ENCODE measurements at regions of chr18 and their contacts with region 1.

Region 1: DNA sequence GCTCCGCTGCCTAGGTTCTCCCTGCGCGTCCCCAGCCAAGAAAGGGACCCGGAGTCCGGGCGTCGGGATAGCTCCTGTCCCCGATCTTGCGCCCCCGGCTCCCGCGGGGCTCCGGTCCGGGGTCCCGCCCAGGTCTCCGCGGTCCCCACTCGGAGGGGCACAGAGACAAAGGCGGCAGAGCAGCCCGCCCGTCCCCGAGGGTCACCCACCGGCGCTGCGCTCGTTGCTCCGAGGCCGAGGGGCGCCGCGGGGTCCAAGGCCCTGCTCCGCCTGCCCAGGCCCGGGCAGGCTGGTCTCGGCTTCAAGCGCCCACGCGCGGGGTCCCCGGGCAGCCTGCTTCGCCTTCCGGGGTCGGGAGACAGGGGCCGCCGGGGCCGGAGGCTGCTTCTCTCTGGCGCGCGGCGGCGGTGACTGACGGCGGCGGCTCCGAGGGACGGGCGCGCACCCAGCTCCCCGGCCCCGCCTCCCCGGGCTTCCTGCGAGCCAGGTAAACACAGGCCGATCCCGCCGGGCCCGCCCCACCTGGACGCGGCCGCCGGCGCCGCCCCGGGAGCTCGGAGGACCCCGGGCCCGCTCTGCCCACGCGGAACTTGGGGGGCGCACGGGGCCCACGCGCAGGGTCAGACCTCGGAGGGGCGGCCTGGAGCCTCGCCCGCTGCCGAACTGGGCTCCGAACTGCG is at the start of gene MBP:
- DNase-seq: peak; percentile 53 to 74
- H3K4me3 ChIP-seq: peak within 1 kb of the TSS; percentile 95
- H3K27ac ChIP-seq: peak within 1 kb of the TSS; percentile 97
- H3K4me1 ChIP-seq: peaks cover 36% of the 10 kb centered on the region
- H3K27me3 ChIP-seq: no peaks in the 10 kb centered on the region
- CTCF ChIP-seq: no peak
- total RNA-seq, gene MBP: 37.9 and 44.4 TPM in 2 replicates

Region 2: GRCh38 chr18:77000527-77000926 is 132.0 kb before region 1 on chr18:
- CTCF ChIA-PET with region 1: no interaction called
- POLR2A ChIA-PET with region 1: no interaction called
- intact Hi-C with region 1: loop called (anchors 5 kb)
- DNase-seq: peak in 1 of 2 experiments; percentile 31
- H3K4me3 ChIP-seq: no peak overlapping the region
- H3K27ac ChIP-seq: no peak overlapping the region
- H3K4me1 ChIP-seq: no peaks in the 10 kb centered on the region
- H3K27me3 ChIP-seq: no peaks in the 10 kb centered on the region
- CTCF ChIP-seq: peak; percentile 98

Region 3: GRCh38 chr18:77054606-77055428 is 77.7 kb before region 1 on chr18:
- CTCF ChIA-PET with region 1: no interaction called
- POLR2A ChIA-PET with region 1: interaction called, 6 read pairs
- intact Hi-C with region 1: loop called (anchors 1 kb)
- DNase-seq: peak; percentile 63 to 96
- H3K4me3 ChIP-seq: peak overlapping the region; percentile 38
- H3K27ac ChIP-seq: peak overlapping the region; percentile 98
- H3K4me1 ChIP-seq: peaks cover 42% of the 10 kb centered on the region
- H3K27me3 ChIP-seq: no peaks in the 10 kb centered on the region
- CTCF ChIP-seq: peak; percentile 52; the same call in 1 of the 2 replicates

Region 4: GRCh38 chr18:77065221-77065981 is 67.1 kb before region 1 on chr18:
- CTCF ChIA-PET with region 1: no interaction called
- POLR2A ChIA-PET with region 1: no interaction called
- intact Hi-C with region 1: loop called (anchors 1 kb)
- DNase-seq: peak; percentile 54 to 97
- H3K4me3 ChIP-seq: no peak overlapping the region
- H3K27ac ChIP-seq: peak overlapping the region; percentile 97
- H3K4me1 ChIP-seq: peaks cover 84% of the 10 kb centered on the region
- H3K27me3 ChIP-seq: no peaks in the 10 kb centered on the region
- CTCF ChIP-seq: no peak

Region 5: DNA sequence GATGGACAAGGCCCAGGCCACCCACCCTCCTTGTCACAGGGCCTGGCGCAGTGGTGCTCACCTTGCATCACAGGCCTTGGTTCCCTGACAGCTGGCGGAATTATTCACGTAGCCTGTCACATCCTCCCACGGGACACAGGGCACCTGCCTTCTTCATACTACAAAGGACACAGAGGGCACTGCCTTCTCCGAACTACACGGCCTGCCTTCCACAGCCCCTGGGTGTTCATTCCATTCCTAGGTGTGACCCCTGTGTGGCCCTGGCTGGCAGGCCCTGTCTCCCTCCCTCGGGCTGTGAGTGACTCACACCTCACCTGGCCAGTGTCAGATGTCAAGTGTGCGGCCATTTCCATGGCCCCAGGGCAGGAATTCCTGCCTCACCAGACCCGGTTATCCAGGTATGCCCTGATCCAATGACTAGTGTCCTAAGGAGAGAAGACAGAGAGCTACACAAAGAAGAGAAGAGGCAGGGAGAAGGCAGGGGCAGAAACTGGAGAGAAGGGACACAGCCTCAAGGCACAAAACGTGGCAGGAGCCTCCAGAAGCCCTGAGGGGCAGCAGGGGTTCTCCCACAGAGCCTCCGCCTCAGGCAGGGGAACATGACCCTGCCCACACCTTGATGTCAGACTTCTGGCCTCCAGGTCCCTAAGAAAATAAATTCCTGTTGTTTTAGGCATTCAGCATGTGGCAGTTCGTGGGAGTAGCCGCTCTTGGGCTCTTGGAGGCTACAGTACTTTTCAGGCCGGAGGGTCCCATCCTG is 43.4 kb before region 1 on chr18:
- CTCF ChIA-PET with region 1: no interaction called
- POLR2A ChIA-PET with region 1: interaction called, 4 read pairs
- intact Hi-C with region 1: loop called (anchors 1 kb)
- DNase-seq: peak; percentile 96 to 99
- H3K4me3 ChIP-seq: peak overlapping the region; percentile 25; the same call in 1 of the 2 replicates
- H3K27ac ChIP-seq: peak overlapping the region; percentile 95
- H3K4me1 ChIP-seq: peaks cover 71% of the 10 kb centered on the region
- H3K27me3 ChIP-seq: no peaks in the 10 kb centered on the region
- CTCF ChIP-seq: no peak

Region 6: DNA sequence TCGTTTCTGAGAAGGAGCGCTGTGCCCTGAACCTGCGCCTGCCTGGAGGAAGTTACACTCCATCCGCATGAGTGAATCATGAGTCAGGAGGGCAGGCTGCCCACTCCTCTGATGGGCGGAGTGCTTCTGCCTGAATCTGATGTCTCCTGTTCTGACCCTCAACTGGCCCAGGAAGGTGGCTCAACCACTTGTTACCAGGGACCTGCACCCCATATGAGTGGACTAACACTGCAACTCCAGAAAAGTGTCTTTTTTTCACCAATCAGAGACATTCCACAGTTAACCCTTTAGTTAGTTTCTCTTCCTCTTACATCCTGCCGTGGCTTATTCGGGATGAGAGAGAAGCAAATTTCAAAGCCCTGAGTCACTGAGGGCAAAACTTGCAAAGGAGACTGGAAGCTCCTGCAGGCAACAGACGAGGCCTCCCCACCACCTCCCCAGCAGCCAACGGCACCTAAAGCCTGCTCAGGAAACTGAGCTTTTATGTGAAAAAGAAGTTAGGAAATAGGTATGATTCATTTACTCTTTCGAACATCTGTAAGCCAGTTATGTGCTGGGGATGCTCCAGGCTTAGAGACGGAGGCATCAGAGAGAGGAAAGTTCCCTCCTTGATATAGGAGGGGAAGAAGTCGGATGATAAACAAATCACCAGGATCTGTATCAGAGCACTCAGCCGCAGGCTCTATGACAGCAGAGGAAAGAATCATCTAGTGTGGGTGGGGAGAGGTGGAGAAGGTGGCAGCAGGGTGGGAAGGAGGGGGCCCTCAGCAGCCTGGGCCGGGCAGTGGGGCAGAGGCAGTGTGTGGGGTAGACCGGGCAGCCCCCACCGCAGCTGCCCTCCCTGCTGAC is 30.9 kb before region 1 on chr18:
- CTCF ChIA-PET with region 1: no interaction called
- POLR2A ChIA-PET with region 1: interaction called, 5 read pairs
- intact Hi-C with region 1: loop called (anchors 1 kb)
- DNase-seq: peak; percentile 85 to 99
- H3K4me3 ChIP-seq: peak overlapping the region; percentile 31; the same call in 1 of the 2 replicates
- H3K27ac ChIP-seq: peak overlapping the region; percentile 99
- H3K4me1 ChIP-seq: peaks cover 52% of the 10 kb centered on the region
- H3K27me3 ChIP-seq: no peaks in the 10 kb centered on the region
- CTCF ChIP-seq: no peak

Region 7: GRCh38 chr18:77207540-77207939 is 75.0 kb after region 1 on chr18:
- CTCF ChIA-PET with region 1: no interaction called
- POLR2A ChIA-PET with region 1: no interaction called
- intact Hi-C with region 1: loop called (anchors 1 kb)
- DNase-seq: no peak
- H3K4me3 ChIP-seq: no peak overlapping the region
- H3K27ac ChIP-seq: no peak overlapping the region
- H3K4me1 ChIP-seq: 0 out of 2 replicates have a peak, but pooled peaks cover 6% of the 10 kb centered on the region
- H3K27me3 ChIP-seq: no peaks in the 10 kb centered on the region
- CTCF ChIP-seq: peak; percentile 46

Region 8: DNA sequence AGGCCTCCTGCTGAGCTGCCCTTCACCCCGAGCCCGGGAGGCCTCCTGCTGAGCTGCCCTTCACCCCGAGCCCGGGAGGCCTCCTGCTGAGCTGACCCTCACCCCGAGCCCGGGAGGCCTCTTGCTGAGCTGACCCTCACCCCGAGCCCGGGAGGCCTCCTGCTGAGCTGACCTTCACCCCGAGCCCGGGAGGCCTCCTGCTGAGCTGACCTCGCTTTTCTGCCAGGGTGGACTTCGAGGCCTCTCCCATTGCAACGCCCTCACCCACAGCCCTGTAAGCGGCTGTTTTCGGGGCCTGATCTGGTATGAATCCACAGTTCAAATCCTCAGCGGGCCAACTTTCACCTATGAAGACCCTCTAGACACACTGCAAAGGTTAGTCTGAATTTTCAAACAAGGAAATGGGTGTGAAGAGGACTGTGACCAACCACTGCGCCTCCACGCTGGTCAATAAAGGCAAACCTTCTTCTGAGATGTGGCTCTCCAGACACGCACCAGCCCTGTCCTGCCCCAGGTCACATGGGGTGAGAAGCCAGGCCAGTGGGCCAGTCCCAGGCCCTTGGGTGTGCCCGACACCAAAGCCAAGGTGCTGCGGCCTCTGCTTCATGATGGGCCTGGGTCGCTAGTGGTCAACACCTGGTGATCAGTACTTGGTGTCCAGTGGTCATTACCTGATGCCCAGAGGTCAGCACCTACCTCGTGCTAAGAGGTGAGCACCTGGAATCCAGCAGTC is 1622.0 kb after region 1 on chr18:
- CTCF ChIA-PET with region 1: no interaction called
- POLR2A ChIA-PET with region 1: no interaction called
- intact Hi-C with region 1: no loop called
- DNase-seq: no peak
- H3K4me3 ChIP-seq: no peak overlapping the region
- H3K27ac ChIP-seq: no peak overlapping the region
- H3K4me1 ChIP-seq: no peaks in the 10 kb centered on the region
- H3K27me3 ChIP-seq: peaks cover 60% of the 10 kb centered on the region
- CTCF ChIP-seq: no peak

Measured in PC-9 (cell line).